ENCODE measurements at regions of chr12 and their contacts with region 1.

Region 1: GRCh38 chr12:109121346-109121880 is 5.0 kb downstream of the ACACB start:
- DNase-seq: no peak
- ATAC-seq: peak in 1 of 2 experiments; percentile 26; a peak in 1 of 6 replicates
- H3K4me3 ChIP-seq: no peak overlapping the region
- H3K27ac ChIP-seq: no peak overlapping the region
- H3K4me1 ChIP-seq: no peaks in the 10 kb centered on the region
- CTCF ChIP-seq: no peak
- EP300 ChIP-seq: no peak
- POLR2A ChIP-seq: no peak
- RAD21 ChIP-seq: no peak

Region 2: GRCh38 chr12:109134186-109134917 is 12.9 kb after region 1 on chr12:
- CTCF ChIA-PET with region 1: interaction called, 10 read pairs
- POLR2A ChIA-PET with region 1: no interaction called
- DNase-seq: peak; percentile 42 to 62
- ATAC-seq: peak in 1 of 2 experiments; percentile 85; a peak in 3 of 6 replicates
- H3K4me3 ChIP-seq: no peak overlapping the region
- H3K27ac ChIP-seq: no peak overlapping the region
- H3K4me1 ChIP-seq: no peaks in the 10 kb centered on the region
- CTCF ChIP-seq: peak; percentile 58
- EP300 ChIP-seq: no peak
- POLR2A ChIP-seq: no peak
- RAD21 ChIP-seq: peak; percentile 50 to 59; a peak in 4 of 5 replicates

Measured in A549 (cell line).